ENCODE measurements at regions of chr22 and their contacts with region 1.

Region 1: DNA sequence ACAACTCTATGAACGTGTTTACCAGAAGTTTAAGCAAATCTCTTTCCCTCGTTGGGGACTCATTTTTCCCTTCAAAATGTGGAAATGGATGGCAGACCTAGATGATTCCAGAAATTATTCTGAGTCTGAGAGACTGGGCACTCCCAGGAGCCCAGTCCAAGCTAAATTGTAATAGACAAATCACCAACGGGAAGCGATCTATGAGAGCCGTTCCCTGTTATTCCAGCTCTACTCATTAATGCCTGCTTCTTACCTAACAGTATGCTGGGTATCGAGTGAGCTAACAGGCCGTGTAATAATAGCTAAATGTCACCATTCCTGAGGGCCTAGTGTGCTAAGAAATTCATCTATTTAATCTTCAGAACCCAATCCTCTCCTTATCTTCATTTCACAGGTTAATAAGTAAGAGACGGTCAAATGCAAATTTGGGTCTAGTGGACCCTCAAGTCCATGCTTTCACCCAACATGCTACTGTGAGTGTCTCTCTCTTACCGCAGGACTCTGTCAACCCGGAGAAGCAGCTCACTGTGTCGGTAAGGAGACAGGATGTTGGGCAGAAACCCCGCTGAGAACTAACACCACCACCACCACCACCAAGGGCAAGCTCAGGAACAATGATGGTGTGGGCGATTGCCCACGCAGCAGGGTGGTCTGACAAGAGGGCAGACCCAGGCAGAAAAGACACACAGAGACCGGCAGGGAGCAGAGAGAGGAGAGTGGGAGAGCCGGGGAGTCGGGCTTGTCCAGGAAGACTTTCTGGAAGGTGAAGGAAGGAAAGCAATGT is 57.1 kb upstream of the TIMP3 start:
- DNase-seq: no peak
- ATAC-seq: no peak
- H3K4me3 ChIP-seq: no peak overlapping the region
- H3K27ac ChIP-seq: peak overlapping the region in 8 of 12 donors; percentile 1 to 60 (median 40)
- H3K4me1 ChIP-seq: peaks cover 0 to 44% (median 21%) of the 10 kb centered on the region in 12 donors
- H3K27me3 ChIP-seq: no peaks in the 10 kb centered on the region
- CTCF ChIP-seq: no peak
- POLR2A ChIP-seq: no peak

Region 2: GRCh38 chr22:32717337-32718240 is 26.8 kb before region 1 on chr22:
- intact Hi-C with region 1: loop called in 1 of 10 experiments (anchors 1 kb)
- DNase-seq: peak in 4 of 5 donors; percentile 57 to 71 (median 62)
- ATAC-seq: peak; percentile 62 to 95 (median 79)
- H3K4me3 ChIP-seq: no peak overlapping the region
- H3K27ac ChIP-seq: peak overlapping the region; percentile 9 to 82 (median 71)
- H3K4me1 ChIP-seq: peaks cover 0 to 41% (median 21%) of the 10 kb centered on the region in 12 donors
- H3K27me3 ChIP-seq: no peaks in the 10 kb centered on the region
- CTCF ChIP-seq: no peak
- POLR2A ChIP-seq: no peak